H1 (cell line): ENCODE measurements at regions of chr5 and their contacts with region 1.

Region 1: GRCh38 chr5:122091936-122092600 is 14.0 kb upstream of the LOX start:
- DNase-seq: no peak
- H3K4me3 ChIP-seq: no peak overlapping the region
- H3K27ac ChIP-seq: no peak overlapping the region
- H3K4me1 ChIP-seq: no peaks in the 10 kb centered on the region
- H3K27me3 ChIP-seq: no peaks in the 10 kb centered on the region
- CTCF ChIP-seq: peak in 2 of 3 experiments; percentile 51 to 53; a peak in 2 of 4 replicates
- EP300 ChIP-seq: no peak
- POLR2A ChIP-seq: no peak
- RAD21 ChIP-seq: peak; percentile 69 to 74

Region 2: DNA sequence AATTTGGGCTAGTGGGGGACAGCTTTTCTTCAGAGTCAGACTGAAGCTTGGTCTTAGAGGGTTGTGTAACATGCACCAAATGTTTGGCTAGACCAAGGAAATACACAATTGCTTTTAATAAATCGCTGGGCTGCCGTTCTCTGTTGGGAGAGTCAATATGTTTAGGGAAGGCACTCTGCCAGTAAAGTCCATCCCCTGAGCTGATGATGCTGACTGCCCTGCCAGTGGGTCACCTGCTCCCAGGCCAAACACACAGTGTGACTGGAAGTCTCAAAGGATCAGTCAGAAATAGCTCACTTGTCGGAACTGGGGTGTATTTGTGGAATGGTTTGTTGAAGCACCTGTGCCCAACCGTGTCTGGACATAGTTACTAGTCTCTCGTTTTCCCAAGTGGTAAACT is 19.4 kb after region 1 on chr5:
- CTCF ChIA-PET with region 1: interaction called, 18 read pairs
- POLR2A ChIA-PET with region 1: no interaction called
- DNase-seq: no peak
- H3K4me3 ChIP-seq: no peak overlapping the region
- H3K27ac ChIP-seq: no peak overlapping the region
- H3K4me1 ChIP-seq: no peaks in the 10 kb centered on the region
- H3K27me3 ChIP-seq: no peaks in the 10 kb centered on the region
- CTCF ChIP-seq: no peak
- EP300 ChIP-seq: no peak
- POLR2A ChIP-seq: no peak
- RAD21 ChIP-seq: no peak